Activated naive CD4-positive, alpha-beta T cell treated with anti-CD3 and anti-CD28 coated beads for 36 hours (primary cell): ENCODE measurements at regions of chr20 and their contacts with region 1.

Region 1: DNA sequence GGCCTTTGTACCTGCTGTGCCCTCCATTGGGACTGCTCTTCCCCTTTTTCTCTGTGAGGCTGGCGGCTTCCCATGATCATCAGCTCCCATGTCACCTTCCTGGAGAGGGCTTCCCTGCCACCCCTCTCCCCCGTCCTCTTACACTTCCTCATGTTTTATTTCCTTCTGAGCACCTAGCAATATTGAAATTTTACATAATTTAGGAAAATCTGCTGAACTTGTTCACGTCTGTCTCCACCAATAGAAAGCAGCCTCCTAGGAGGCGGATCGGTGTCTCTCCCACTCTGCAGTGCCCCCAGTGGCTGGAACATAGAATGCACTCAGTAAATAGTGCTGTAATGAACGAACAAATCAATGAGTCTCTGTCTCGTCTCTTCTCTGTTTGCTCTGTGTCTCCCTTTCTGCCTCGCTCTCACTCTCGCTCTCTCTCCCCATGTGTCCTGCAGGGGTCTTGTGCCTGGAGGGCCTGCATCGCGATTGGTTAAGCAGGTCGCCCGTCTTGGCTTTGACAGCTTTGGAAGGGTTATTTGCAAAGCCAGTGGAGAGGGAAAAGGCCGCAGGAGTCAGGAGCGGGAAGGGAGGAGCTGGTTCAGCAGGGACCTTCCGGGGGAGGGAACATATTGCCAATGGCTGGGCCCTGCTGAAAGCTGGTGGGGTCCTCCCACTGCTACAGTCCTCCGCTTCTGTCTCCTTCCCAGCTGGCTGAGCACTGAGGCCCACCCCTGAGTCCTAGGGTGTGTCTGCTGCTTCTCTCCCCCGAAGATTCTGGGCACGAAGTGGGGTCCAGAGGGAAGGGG is 12.1 kb upstream of the OCSTAMP start:
- DNase-seq: peak; percentile 83
- H3K4me3 Mint-ChIP-seq: no peak overlapping the region
- H3K27ac Mint-ChIP-seq: no peak overlapping the region
- H3K4me1 Mint-ChIP-seq: peaks cover 14% of the 10 kb centered on the region
- H3K27me3 Mint-ChIP-seq: peaks cover 7% of the 10 kb centered on the region

Region 2: GRCh38 chr20:44642203-44643153 is 1920.1 kb before region 1 on chr20:
- CTCF ChIA-PET with region 1: no interaction called
- intact Hi-C with region 1: loop called (anchors 10 kb)
- DNase-seq: peak; percentile 52
- H3K4me3 Mint-ChIP-seq: peak overlapping the region; percentile 19
- H3K27ac Mint-ChIP-seq: peak overlapping the region; percentile 57
- H3K4me1 Mint-ChIP-seq: peaks cover 60% of the 10 kb centered on the region
- H3K27me3 Mint-ChIP-seq: no peaks in the 10 kb centered on the region

Region 3: GRCh38 chr20:46400828-46401477 is 161.6 kb before region 1 on chr20:
- CTCF ChIA-PET with region 1: no interaction called
- intact Hi-C with region 1: loop called (anchors 2 kb)
- DNase-seq: peak; percentile 63
- H3K4me3 Mint-ChIP-seq: peak overlapping the region; percentile 59
- H3K27ac Mint-ChIP-seq: peak overlapping the region; percentile 91
- H3K4me1 Mint-ChIP-seq: peaks cover 60% of the 10 kb centered on the region
- H3K27me3 Mint-ChIP-seq: no peaks in the 10 kb centered on the region

Region 4: DNA sequence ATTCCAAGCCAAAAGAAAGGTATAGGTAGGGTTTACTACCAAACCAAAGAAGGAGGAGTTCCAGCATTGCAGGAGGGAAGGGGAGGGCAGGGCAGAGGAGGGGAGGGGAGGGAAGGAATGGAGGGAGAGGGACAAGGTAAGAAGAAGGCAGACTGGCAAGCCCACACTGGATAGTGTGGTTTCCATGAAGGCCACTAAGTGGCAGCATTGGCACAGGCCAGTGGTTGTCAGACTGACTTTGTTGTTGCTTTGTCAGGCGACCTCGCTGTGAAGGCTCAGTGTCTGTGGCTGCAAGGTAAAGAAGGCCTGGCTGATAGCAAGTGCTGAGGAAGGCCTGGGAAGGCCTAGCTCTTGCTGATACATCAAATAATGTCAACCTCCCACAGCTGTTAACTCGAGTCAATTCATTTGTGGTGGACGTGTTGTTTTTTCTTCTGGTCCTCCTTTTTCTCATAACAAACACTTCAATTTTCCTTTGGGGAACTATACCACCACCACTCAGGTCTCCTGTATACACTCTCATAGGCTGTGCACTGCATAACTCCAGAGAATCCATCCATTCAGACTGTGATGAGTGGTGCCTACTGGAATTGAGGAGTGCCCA is 41.5 kb before region 1 on chr20:
- CTCF ChIA-PET with region 1: interaction called, 4 read pairs
- intact Hi-C with region 1: loop called (anchors 2 kb)
- DNase-seq: peak; percentile 70
- H3K4me3 Mint-ChIP-seq: no peak overlapping the region
- H3K27ac Mint-ChIP-seq: no peak overlapping the region
- H3K4me1 Mint-ChIP-seq: no peaks in the 10 kb centered on the region
- H3K27me3 Mint-ChIP-seq: peaks cover 23% of the 10 kb centered on the region

Region 5: GRCh38 chr20:46545077-46545826 is 17.3 kb before region 1 on chr20:
- CTCF ChIA-PET with region 1: interaction called, 5 read pairs
- intact Hi-C with region 1: loop called (anchors 1 kb)
- DNase-seq: peak; percentile 77
- H3K4me3 Mint-ChIP-seq: no peak overlapping the region
- H3K27ac Mint-ChIP-seq: peak overlapping the region; percentile 71
- H3K4me1 Mint-ChIP-seq: peaks cover 7% of the 10 kb centered on the region
- H3K27me3 Mint-ChIP-seq: peaks cover 9% of the 10 kb centered on the region

Region 6: DNA sequence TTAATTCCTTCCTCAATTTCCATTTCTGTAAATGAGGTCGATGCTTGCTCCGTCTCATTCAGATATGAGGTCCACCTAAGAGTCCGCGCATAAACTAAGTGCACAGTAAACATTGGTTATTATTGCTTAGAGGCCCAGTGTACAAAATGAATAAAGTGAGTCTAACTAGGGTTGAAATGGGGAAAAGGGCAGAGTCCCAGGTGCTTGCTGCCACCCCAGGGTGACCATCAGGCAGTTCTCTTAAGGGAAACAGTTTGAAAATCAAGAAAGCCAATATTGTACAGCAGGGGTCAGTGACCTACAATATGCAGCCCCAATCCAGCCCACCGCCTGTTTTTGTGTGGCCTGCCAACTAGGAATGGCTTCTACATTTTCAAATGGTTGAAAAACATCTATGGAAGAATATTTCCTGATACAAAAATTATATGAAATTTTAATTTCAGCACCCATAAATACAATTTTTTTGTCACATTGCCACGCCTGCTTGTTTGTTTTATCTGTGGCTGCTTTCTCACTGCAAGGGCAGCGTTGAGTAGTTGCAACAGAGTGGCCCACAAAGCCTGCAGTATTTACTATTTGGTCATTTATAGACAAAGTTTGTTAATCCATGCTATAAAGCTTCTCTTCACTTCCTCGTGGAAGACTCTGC is 45.4 kb after region 1 on chr20:
- CTCF ChIA-PET with region 1: no interaction called
- intact Hi-C with region 1: no loop called
- DNase-seq: no peak
- H3K4me3 Mint-ChIP-seq: no peak overlapping the region
- H3K27ac Mint-ChIP-seq: no peak overlapping the region
- H3K4me1 Mint-ChIP-seq: no peaks in the 10 kb centered on the region
- H3K27me3 Mint-ChIP-seq: peaks cover 3% of the 10 kb centered on the region

Region 7: GRCh38 chr20:46681032-46681854 is 118.7 kb after region 1 on chr20:
- CTCF ChIA-PET with region 1: no interaction called
- intact Hi-C with region 1: loop called (anchors 1 kb)
- DNase-seq: peak; percentile 86
- H3K4me3 Mint-ChIP-seq: no peak overlapping the region
- H3K27ac Mint-ChIP-seq: no peak overlapping the region
- H3K4me1 Mint-ChIP-seq: peaks cover 28% of the 10 kb centered on the region
- H3K27me3 Mint-ChIP-seq: no peaks in the 10 kb centered on the region